ENCODE measurements at regions of chr2 and their contacts with region 1.

Region 1: GRCh38 chr2:64653349-64654062 is at the start of gene SERTAD2:
- DNase-seq: peak; percentile 94
- ATAC-seq: peak; percentile 81
- H3K4me3 ChIP-seq: peak within 1 kb of the TSS; percentile 84 to 96 (median 89)
- H3K4me3 Mint-ChIP-seq: peak within 1 kb of the TSS; percentile 93
- H3K27ac ChIP-seq: peak within 1 kb of the TSS; percentile 92 to 93
- H3K27ac Mint-ChIP-seq: peak within 1 kb of the TSS; percentile 98
- H3K4me1 ChIP-seq: peaks cover 72 to 77% of the 10 kb centered on the region in 2 donors
- H3K4me1 Mint-ChIP-seq: peaks cover 79% of the 10 kb centered on the region
- H3K27me3 ChIP-seq: no peaks in the 10 kb centered on the region
- H3K27me3 Mint-ChIP-seq: no peaks in the 10 kb centered on the region
- CTCF ChIP-seq: peak; percentile 20
- total RNA-seq, gene SERTAD2: 49.5 and 51.2 TPM in 2 replicates

Region 2: DNA sequence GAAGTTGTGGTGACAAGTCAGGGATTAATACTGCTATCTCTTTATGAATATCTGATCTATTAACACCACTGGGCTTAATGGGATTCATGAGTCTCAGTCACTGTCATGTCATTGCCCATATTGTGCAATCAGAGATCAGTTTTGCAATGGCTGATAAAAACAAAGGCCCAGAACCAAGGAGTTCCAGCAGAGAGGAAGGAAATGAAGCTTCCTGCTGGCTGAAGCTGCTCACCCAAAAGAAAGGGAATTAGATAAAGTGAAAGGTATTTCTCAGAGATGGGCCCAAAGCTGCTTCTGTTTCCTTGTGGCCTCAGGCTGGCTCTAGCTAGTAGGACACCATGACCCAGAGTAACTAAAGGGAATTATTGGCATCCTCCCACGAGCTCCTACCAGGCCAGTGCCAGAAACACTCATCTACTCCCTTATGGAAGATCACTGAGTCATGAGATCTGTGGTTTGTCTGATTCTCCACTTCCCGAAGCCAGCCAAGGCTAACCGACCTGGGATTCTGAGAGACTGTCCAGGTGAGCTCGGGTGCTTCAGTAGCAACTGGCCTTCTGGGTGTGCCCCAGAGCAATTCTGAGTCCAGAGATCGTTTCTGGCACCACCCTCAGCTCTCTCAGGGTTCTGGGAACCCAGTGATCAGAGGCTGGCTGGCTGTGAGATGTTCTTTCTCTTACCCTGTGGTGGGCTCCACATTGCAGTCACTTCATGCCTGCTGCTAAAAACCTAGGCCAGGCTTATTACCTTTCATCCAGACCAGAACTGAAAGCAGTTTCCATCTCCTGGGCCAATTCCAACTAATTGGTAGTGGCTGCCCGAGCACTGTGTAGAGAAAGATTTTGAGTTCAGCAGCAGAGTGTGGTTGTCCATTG is 379.7 kb before region 1 on chr2:
- CTCF ChIA-PET with region 1: no interaction called
- POLR2A ChIA-PET with region 1: no interaction called
- intact Hi-C with region 1: no loop called
- DNase-seq: no peak
- ATAC-seq: no peak
- H3K4me3 ChIP-seq: peak overlapping the region in 1 of 5 experiments; percentile 74
- H3K4me3 Mint-ChIP-seq: no peak overlapping the region
- H3K27ac ChIP-seq: no peak overlapping the region
- H3K27ac Mint-ChIP-seq: peak overlapping the region; percentile 11
- H3K4me1 ChIP-seq: peaks cover 17 to 19% of the 10 kb centered on the region in 2 donors
- H3K4me1 Mint-ChIP-seq: peaks cover 27% of the 10 kb centered on the region
- H3K27me3 ChIP-seq: no peaks in the 10 kb centered on the region
- H3K27me3 Mint-ChIP-seq: no peaks in the 10 kb centered on the region
- CTCF ChIP-seq: no peak

Region 3: DNA sequence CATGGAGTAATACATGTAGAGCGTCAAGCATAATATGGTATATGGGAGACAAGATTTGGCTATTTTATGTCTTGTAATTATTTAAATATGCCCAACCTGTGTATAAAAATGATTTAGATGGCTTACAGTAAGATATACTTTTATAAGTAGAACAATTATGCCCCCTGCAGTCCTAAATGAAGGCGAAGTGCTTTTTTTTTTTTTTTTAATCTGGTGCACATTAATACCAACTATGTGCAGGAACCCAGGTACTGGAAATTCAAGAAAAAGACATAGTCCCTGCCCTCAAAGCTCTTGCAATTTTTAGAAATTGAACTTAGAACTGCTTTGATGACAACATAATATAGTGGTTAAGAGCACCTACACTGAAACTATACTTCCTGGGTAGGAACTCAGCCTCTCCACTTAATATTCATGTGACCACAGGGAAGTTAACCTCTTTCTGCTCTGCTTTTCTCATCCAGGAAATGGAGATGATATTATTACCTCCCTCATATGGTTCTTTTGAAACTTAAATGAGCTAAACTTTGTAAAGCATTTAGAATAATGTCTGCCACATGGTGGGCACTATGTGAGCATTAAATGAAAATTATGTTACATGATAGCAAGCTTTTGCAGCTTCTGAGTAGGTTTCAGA is 91.2 kb before region 1 on chr2:
- CTCF ChIA-PET with region 1: no interaction called
- POLR2A ChIA-PET with region 1: no interaction called
- intact Hi-C with region 1: no loop called
- DNase-seq: peak; percentile 67
- ATAC-seq: peak; percentile 51
- H3K4me3 ChIP-seq: no peak overlapping the region
- H3K4me3 Mint-ChIP-seq: no peak overlapping the region
- H3K27ac ChIP-seq: no peak overlapping the region
- H3K27ac Mint-ChIP-seq: peak overlapping the region; percentile 38
- H3K4me1 ChIP-seq: peaks cover 5 to 7% of the 10 kb centered on the region in 2 donors
- H3K4me1 Mint-ChIP-seq: peaks cover 39% of the 10 kb centered on the region
- H3K27me3 ChIP-seq: no peaks in the 10 kb centered on the region
- H3K27me3 Mint-ChIP-seq: no peaks in the 10 kb centered on the region
- CTCF ChIP-seq: peak; percentile 76

Region 4: GRCh38 chr2:64666810-64667438 is 13.4 kb after region 1 on chr2:
- CTCF ChIA-PET with region 1: interaction called, 71 read pairs
- POLR2A ChIA-PET with region 1: interaction called, 32 read pairs
- intact Hi-C with region 1: loop called (anchors 1 kb)
- DNase-seq: no peak
- ATAC-seq: peak; percentile 70
- H3K4me3 ChIP-seq: peak overlapping the region in 2 of 5 experiments; percentile 29 to 41
- H3K4me3 Mint-ChIP-seq: peak overlapping the region; percentile 67
- H3K27ac ChIP-seq: peak overlapping the region; percentile 66 to 81
- H3K27ac Mint-ChIP-seq: no peak overlapping the region
- H3K4me1 ChIP-seq: peaks cover 46 to 52% of the 10 kb centered on the region in 2 donors
- H3K4me1 Mint-ChIP-seq: peaks cover 46% of the 10 kb centered on the region
- H3K27me3 ChIP-seq: no peaks in the 10 kb centered on the region
- H3K27me3 Mint-ChIP-seq: no peaks in the 10 kb centered on the region
- CTCF ChIP-seq: no peak

Region 5: GRCh38 chr2:64750817-64751285 is 97.3 kb after region 1 on chr2:
- CTCF ChIA-PET with region 1: interaction called, 121 read pairs
- POLR2A ChIA-PET with region 1: interaction called, 138 read pairs
- intact Hi-C with region 1: loop called (anchors 1 kb)
- DNase-seq: peak; percentile 99
- ATAC-seq: peak; percentile 81
- H3K4me3 ChIP-seq: peak overlapping the region; percentile 75 to 99 (median 93)
- H3K4me3 Mint-ChIP-seq: peak overlapping the region; percentile 91
- H3K27ac ChIP-seq: peak overlapping the region; percentile 83 to 88
- H3K27ac Mint-ChIP-seq: peak overlapping the region; percentile 98
- H3K4me1 ChIP-seq: peaks cover 18 to 19% of the 10 kb centered on the region in 2 donors
- H3K4me1 Mint-ChIP-seq: peaks cover 28% of the 10 kb centered on the region
- H3K27me3 ChIP-seq: no peaks in the 10 kb centered on the region
- H3K27me3 Mint-ChIP-seq: no peaks in the 10 kb centered on the region
- CTCF ChIP-seq: no peak

Region 6: GRCh38 chr2:64839844-64840243 is 186.3 kb after region 1 on chr2:
- CTCF ChIA-PET with region 1: interaction called, 78 read pairs
- POLR2A ChIA-PET with region 1: interaction called, 3 read pairs
- intact Hi-C with region 1: no loop called
- DNase-seq: peak; percentile 89
- ATAC-seq: peak; percentile 89
- H3K4me3 ChIP-seq: peak overlapping the region in 1 of 5 experiments; percentile 0
- H3K4me3 Mint-ChIP-seq: peak overlapping the region; percentile 74
- H3K27ac ChIP-seq: peak overlapping the region; percentile 79 to 83
- H3K27ac Mint-ChIP-seq: peak overlapping the region; percentile 97
- H3K4me1 ChIP-seq: peaks cover 40 to 59% of the 10 kb centered on the region in 2 donors
- H3K4me1 Mint-ChIP-seq: peaks cover 45% of the 10 kb centered on the region
- H3K27me3 ChIP-seq: no peaks in the 10 kb centered on the region
- H3K27me3 Mint-ChIP-seq: no peaks in the 10 kb centered on the region
- CTCF ChIP-seq: no peak

Region 7: DNA sequence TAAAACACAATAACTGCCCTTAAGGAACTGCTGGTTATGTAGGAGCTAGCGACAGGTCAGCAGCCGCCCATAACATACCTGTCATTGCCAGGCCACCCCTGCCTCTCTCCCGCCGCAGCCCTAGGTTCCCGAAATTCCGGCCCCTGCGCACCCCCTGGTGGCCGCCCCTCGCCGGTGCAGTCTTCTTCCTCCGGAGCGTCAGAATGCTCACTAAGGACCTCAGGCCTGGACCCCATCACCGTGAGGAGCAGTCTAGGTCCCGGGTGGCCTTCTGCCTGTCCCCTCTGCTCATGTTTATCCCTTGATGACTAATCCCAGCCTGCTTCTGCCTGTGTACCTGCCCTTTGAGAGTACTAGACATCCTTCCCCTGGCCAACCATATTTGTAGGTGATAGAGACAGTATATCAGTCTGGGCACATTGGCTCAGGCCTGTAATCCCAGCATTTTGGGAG is 220.0 kb after region 1 on chr2:
- CTCF ChIA-PET with region 1: interaction called, 14 read pairs
- POLR2A ChIA-PET with region 1: interaction called, 5 read pairs
- intact Hi-C with region 1: no loop called
- DNase-seq: peak; percentile 87
- ATAC-seq: peak; percentile 99
- H3K4me3 ChIP-seq: peak overlapping the region in 3 of 5 experiments; percentile 11 to 35 (median 29)
- H3K4me3 Mint-ChIP-seq: peak overlapping the region; percentile 67
- H3K27ac ChIP-seq: no peak overlapping the region
- H3K27ac Mint-ChIP-seq: no peak overlapping the region
- H3K4me1 ChIP-seq: peaks cover 7 to 9% of the 10 kb centered on the region in 2 donors
- H3K4me1 Mint-ChIP-seq: peaks cover 7% of the 10 kb centered on the region
- H3K27me3 ChIP-seq: no peaks in the 10 kb centered on the region
- H3K27me3 Mint-ChIP-seq: no peaks in the 10 kb centered on the region
- CTCF ChIP-seq: peak; percentile 93

Measured in B cell (primary cell).